Activated CD8-positive, alpha-beta memory T cell treated with anti-CD3 and anti-CD28 coated beads, Interleukin-2, amount 10 ng/mL, durations not matched to agents 7 days and 5 days (primary cell): ENCODE measurements at regions of chr9 and their contacts with region 1.

Region 1: DNA sequence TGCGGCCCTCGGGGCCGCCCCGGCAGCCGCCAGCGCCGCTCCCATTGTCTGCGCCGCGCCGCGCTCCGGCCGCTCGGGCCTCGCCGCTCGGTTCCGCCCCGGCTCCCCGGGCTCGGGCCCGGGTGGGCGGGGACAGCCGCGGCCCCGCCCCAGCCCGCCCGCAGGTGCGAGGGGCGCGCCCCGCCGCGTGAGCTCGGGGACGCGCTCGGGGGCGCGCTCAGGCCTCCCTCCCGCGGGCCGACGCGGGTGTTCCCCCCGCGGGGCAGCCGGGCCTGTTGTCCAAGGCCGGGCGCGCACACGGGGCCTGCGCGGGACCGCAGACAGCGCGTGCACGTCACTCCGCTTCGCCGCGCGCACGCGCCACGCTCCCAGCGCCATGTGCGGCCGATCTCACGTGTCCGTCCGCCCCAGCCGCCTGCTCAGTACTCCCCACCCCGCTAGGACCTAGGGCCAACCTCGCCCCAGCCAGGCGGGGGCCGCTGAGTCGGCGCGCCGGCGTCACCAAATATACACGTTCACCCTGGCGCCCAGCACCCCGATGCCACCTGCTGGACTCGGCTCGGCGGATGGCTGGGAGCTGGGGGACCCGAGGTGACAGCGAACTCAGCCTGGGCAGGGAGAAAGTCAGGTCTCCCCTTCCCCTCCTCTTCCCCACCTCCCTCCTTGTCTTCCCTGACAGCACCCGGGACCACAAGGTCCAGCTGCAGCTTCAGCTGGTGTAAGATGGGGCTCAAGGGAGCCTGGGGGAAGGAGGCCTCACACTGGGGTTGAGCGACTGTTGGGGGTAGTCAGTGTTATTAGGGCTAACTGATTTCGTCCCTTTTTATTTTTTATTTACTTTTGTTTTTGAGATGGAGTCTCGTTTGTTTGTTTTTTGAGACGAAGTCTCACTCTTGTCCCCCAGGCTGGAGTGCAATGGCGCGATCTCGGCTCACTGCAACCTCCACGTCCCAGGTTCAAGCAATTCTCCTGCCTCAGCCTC is 14.3 kb downstream of the GBGT1 start:
- DNase-seq: peak; percentile 88
- ATAC-seq: peak; percentile 62
- H3K4me3 Mint-ChIP-seq: peak overlapping the region; percentile 59
- H3K27ac Mint-ChIP-seq: peak overlapping the region; percentile 73
- H3K4me1 Mint-ChIP-seq: peaks cover 36% of the 10 kb centered on the region
- H3K27me3 Mint-ChIP-seq: no peaks in the 10 kb centered on the region

Region 2: GRCh38 chr9:133030317-133031129 is 118.9 kb before region 1 on chr9 and contains the start of gene GTF3C5:
- CTCF ChIA-PET with region 1: interaction called, 97 read pairs
- DNase-seq: peak; percentile 96
- ATAC-seq: peak; percentile 97
- H3K4me3 Mint-ChIP-seq: peak within 1 kb of the TSS; percentile 90
- H3K27ac Mint-ChIP-seq: peak within 1 kb of the TSS; percentile 86
- H3K4me1 Mint-ChIP-seq: peaks cover 38% of the 10 kb centered on the region
- H3K27me3 Mint-ChIP-seq: no peaks in the 10 kb centered on the region
- total RNA-seq, gene GTF3C5: 83.8 to 89.0 TPM

Region 3: GRCh38 chr9:133042676-133043075 is 106.7 kb before region 1 on chr9:
- CTCF ChIA-PET with region 1: interaction called, 25 read pairs
- DNase-seq: no peak
- ATAC-seq: no peak
- H3K4me3 Mint-ChIP-seq: no peak overlapping the region
- H3K27ac Mint-ChIP-seq: peak overlapping the region; percentile 41
- H3K4me1 Mint-ChIP-seq: peaks cover 6% of the 10 kb centered on the region
- H3K27me3 Mint-ChIP-seq: no peaks in the 10 kb centered on the region

Region 4: DNA sequence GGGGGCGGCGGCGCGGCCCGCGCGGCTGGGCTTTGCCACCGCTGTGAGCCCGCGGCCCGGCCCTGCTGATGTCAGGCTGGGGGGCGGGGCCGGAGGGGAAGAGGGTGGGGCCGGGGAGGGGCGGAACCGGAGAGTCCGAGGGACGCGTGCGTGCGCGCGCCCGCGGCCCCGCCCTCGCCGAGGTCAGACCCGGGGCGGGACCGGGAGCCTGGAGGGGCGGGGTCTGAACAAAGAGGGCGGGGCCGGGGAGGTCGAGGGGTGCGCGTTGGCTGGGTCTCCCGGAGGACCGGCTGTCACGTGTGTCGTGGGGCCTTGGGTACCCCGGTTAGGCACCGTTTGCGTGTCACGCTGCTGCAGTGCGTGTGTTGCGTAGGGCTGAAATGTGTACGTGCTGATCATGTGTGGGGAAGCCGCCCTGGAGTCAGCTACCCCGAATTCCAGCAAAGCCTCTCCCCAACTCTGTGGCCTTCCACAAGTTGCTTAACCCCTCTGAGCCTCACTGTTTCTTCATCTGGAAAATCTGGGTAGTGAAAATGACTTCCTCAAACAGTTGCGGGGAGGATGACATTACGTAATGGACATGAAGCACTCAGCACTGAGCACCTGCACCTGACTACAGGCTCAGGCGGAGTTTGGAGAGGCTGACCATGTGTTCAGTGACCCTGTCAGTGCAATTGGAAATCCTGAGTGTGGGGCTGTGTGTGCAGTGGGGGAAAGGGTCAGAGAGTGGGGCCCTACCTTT is 28.0 kb before region 1 on chr9 and contains the start of gene RALGDS:
- CTCF ChIA-PET with region 1: interaction called, 505 read pairs
- DNase-seq: peak; percentile 91
- ATAC-seq: peak; percentile 80
- H3K4me3 Mint-ChIP-seq: peak within 1 kb of the TSS; percentile 64
- H3K27ac Mint-ChIP-seq: peak within 1 kb of the TSS; percentile 77
- H3K4me1 Mint-ChIP-seq: peaks cover 75% of the 10 kb centered on the region
- H3K27me3 Mint-ChIP-seq: no peaks in the 10 kb centered on the region
- total RNA-seq, gene RALGDS: 103 to 114 TPM

Region 5: DNA sequence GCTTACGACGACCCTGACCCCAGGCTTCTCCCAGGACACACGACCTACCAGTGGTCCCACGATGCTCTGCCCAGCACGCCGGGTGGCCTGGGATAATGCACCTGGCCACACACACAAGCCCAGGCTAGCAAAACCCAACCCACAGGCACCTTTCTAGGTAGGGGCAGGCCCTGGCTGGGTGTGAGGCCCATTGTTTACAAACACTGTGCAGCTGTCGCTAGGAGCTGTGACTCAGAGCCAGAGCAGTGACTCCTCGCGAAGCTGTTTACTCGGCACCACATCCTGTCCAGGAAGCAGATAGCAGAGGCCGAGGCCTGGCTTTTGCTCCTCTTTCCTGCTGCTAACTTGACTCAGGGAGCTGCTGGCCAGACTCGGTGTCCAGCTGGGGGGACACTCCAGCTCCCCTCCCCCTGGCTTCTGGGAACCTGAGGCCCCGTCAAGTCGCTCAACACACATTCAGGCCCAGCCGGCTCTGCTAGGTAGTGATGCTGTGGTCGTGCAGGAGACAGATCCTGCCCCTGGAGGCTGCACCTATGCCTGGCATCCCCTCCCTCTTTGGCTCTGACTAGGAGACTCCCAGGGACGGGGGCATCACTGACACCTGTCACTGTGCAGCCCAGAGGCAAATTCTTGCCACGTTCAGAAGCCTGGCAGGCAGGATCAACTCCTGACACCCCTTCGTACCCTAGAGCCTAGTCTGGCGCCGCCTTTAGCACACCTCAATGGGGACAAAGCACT is 15.6 kb before region 1 on chr9:
- CTCF ChIA-PET with region 1: interaction called, 276 read pairs
- DNase-seq: peak; percentile 97
- ATAC-seq: peak; percentile 77
- H3K4me3 Mint-ChIP-seq: peak overlapping the region; percentile 44
- H3K27ac Mint-ChIP-seq: peak overlapping the region; percentile 99
- H3K4me1 Mint-ChIP-seq: peaks cover 91% of the 10 kb centered on the region
- H3K27me3 Mint-ChIP-seq: no peaks in the 10 kb centered on the region

Region 6: GRCh38 chr9:133387425-133388079 is 238.1 kb after region 1 on chr9:
- CTCF ChIA-PET with region 1: no interaction called
- DNase-seq: no peak
- ATAC-seq: no peak
- H3K4me3 Mint-ChIP-seq: no peak overlapping the region
- H3K27ac Mint-ChIP-seq: no peak overlapping the region
- H3K4me1 Mint-ChIP-seq: no peaks in the 10 kb centered on the region
- H3K27me3 Mint-ChIP-seq: peaks cover 8% of the 10 kb centered on the region